ENCODE measurements at regions of chr1 and their contacts with region 1.

Region 1: DNA sequence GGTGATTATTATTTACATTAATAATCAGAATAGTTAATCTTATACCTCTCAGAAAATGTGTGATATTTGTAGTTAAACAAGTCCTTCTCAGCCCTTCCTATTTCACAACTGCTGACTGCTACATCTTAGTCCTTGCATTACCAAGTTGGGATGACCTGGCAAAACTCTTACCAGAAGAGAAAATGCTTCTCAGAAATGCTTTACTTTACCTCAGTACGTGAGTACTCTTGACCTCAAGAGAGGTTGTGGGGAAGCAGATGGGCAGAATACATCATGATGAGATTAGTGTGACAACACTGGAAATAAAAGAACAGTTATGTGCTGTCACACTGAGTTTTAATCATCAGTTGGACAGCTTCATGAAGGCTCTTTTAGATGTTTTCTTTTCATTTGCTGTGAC is 16.2 kb downstream of the CFAP126 start:
- DNase-seq: no peak
- H3K4me3 ChIP-seq: no peak overlapping the region
- H3K27ac ChIP-seq: no peak overlapping the region
- H3K4me1 ChIP-seq: no peaks in the 10 kb centered on the region
- H3K27me3 ChIP-seq: no peaks in the 10 kb centered on the region
- CTCF ChIP-seq: no peak
- POLR2A ChIP-seq: no peak

Region 2: DNA sequence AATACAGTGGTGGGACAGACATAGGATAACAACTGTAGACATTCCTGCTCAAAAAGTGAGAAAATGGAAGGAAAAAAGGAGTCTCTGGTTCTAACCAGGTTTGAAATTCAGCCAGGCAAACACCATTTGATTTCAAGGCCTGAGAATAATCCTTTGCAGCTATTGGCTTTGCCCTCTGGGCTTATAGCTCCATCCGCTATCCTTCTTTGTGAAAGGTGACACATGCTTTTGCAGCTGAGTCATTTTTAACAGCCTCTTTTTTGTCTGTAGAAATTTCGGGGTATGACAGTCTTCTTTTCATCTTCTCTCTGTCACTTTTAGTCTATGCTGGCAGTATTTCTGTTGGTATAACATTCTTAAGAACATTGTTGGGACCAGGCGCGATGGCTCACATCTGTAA is 21.1 kb before region 1 on chr1:
- CTCF ChIA-PET with region 1: no interaction called
- POLR2A ChIA-PET with region 1: no interaction called
- dilution Hi-C with region 1: no loop called
- intact Hi-C with region 1: loop called (anchors 2 kb)
- DNase-seq: no peak
- H3K4me3 ChIP-seq: no peak overlapping the region
- H3K27ac ChIP-seq: no peak overlapping the region
- H3K4me1 ChIP-seq: no peaks in the 10 kb centered on the region
- H3K27me3 ChIP-seq: no peaks in the 10 kb centered on the region
- CTCF ChIP-seq: no peak
- POLR2A ChIP-seq: no peak